ENCODE measurements at regions of chr4 and their contacts with region 1.

Region 1: GRCh38 chr4:119212234-119212963 is at the start of gene USP53:
- DNase-seq: peak; percentile 99
- H3K4me3 ChIP-seq: peak within 1 kb of the TSS; percentile 58 to 99 (median 98)
- H3K27ac ChIP-seq: peak within 1 kb of the TSS; percentile 96
- H3K4me1 ChIP-seq: peaks cover 41% of the 10 kb centered on the region
- H3K27me3 ChIP-seq: no peaks in the 10 kb centered on the region
- CTCF ChIP-seq: no peak
- POLR2A ChIP-seq: peak; percentile 93
- total RNA-seq, gene USP53: 22.8 and 28.3 TPM in 2 replicates

Region 2: DNA sequence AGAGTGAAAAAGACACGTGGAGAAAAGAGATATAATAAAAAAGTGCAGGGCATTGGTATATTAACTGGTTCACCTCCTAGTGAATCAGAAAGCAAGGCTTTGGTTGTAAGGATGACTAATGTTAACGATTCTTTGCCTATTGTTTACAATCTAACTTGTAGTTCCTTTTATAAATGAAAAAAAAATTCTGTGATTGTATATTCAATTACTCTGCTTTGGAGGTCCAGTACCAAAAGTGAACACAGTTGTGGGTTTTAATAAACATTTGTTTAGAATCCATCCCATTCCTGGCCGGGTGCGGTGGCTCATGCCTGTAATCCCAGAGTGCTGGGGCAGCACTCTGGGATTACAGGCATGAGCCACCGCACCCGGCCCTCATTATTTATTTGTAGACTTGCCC is 822.7 kb before region 1 on chr4:
- CTCF ChIA-PET with region 1: no interaction called
- POLR2A ChIA-PET with region 1: no interaction called
- dilution Hi-C with region 1: no loop called
- intact Hi-C with region 1: no loop called
- DNase-seq: no peak
- H3K4me3 ChIP-seq: no peak overlapping the region
- H3K27ac ChIP-seq: no peak overlapping the region
- H3K4me1 ChIP-seq: no peaks in the 10 kb centered on the region
- H3K27me3 ChIP-seq: no peaks in the 10 kb centered on the region
- CTCF ChIP-seq: no peak
- POLR2A ChIP-seq: no peak

Region 3: DNA sequence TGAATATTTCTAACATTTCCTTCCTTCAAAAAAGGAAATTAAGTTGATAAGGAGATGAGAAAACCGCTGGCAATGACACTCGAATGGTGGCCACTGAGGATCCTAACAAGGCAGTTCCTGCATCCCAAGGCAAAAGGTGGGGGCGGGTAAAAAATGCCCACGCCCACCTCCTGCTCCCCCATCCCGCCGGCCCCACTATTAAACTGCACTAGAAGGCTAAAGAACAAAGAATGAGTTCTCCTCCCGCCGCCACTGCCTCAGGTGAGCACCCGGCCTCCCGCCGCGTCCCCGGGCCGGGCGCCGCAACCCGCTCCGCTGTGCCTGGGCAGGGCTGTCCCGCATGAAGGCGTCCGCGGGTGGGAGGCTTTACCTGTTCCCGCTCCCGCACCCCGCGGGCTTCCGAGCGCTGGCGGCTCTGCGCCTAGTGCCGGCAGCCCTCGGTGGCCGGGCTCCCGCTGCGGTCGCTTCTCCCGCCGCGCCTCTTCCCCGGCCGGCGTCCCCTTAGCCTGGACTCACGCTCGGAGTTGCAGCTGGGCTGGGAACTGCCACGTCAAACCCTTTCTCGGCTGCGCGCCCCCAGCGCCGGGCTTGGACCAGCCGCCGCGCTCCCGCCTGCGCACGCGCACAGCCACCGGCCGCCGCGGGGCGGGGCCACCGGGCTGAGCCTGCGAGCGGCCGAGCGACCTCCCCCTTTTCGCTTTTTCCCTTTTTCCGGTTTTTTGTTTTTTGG is 376.7 kb before region 1 on chr4 and contains the start of gene SEC24D:
- CTCF ChIA-PET with region 1: no interaction called
- POLR2A ChIA-PET with region 1: no interaction called
- dilution Hi-C with region 1: no loop called
- intact Hi-C with region 1: loop called (anchors 5 kb)
- DNase-seq: peak; percentile 89
- H3K4me3 ChIP-seq: peak within 1 kb of the TSS; percentile 87 to 95 (median 95)
- H3K27ac ChIP-seq: peak within 1 kb of the TSS; percentile 91
- H3K4me1 ChIP-seq: peaks cover 20% of the 10 kb centered on the region
- H3K27me3 ChIP-seq: no peaks in the 10 kb centered on the region
- CTCF ChIP-seq: no peak
- POLR2A ChIP-seq: peak; percentile 73
- total RNA-seq, gene SEC24D: 127 and 133 TPM in 2 replicates

Region 4: DNA sequence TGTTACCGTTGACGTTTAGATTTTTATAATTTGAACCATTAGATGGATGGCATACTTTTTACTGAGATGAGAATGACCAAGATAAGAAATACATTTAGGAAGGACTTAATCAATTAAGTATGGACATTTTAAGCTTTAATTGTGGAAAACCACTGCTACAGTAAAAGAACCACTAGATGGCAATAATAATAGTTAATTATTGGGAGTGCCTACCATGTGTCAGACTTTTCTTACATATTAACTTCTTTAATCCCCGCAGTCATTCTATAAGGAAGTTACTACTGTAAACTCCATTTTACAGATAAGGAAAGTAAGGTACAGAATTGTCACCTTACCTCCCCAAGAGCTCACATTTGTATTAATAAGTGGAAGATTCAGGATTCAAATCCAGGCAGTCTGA is 125.3 kb before region 1 on chr4:
- CTCF ChIA-PET with region 1: interaction called, 52 read pairs
- POLR2A ChIA-PET with region 1: interaction called, 8 read pairs
- dilution Hi-C with region 1: no loop called
- intact Hi-C with region 1: loop called (anchors 1 kb)
- DNase-seq: peak; percentile 53
- H3K4me3 ChIP-seq: no peak overlapping the region
- H3K27ac ChIP-seq: no peak overlapping the region
- H3K4me1 ChIP-seq: no peaks in the 10 kb centered on the region
- H3K27me3 ChIP-seq: no peaks in the 10 kb centered on the region
- CTCF ChIP-seq: peak; percentile 14 to 22
- POLR2A ChIP-seq: no peak

Region 5: DNA sequence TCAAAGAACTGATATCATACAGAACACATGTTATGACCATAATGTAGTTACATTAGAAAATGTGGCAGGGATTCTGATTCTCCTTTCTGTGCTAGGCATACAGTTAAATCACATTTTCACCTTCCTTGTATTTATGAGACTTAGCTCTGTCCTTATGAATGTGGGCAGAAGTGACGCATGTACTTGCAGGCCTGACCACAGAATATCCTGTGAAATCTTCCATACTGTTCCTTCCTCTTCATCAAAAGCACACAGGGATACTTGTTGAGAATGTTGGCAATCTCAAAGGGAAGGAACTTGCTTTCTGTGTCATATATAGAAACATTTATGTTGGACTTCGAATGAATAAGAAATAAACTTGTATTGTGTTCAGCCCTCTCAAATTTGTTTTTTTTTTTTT is 94.0 kb before region 1 on chr4:
- CTCF ChIA-PET with region 1: interaction called, 5 read pairs
- POLR2A ChIA-PET with region 1: interaction called, 3 read pairs
- dilution Hi-C with region 1: no loop called
- intact Hi-C with region 1: loop called (anchors 1 kb)
- DNase-seq: peak; percentile 89
- H3K4me3 ChIP-seq: no peak overlapping the region
- H3K27ac ChIP-seq: peak overlapping the region; percentile 80
- H3K4me1 ChIP-seq: peaks cover 40% of the 10 kb centered on the region
- H3K27me3 ChIP-seq: no peaks in the 10 kb centered on the region
- CTCF ChIP-seq: no peak
- POLR2A ChIP-seq: no peak

Region 6: DNA sequence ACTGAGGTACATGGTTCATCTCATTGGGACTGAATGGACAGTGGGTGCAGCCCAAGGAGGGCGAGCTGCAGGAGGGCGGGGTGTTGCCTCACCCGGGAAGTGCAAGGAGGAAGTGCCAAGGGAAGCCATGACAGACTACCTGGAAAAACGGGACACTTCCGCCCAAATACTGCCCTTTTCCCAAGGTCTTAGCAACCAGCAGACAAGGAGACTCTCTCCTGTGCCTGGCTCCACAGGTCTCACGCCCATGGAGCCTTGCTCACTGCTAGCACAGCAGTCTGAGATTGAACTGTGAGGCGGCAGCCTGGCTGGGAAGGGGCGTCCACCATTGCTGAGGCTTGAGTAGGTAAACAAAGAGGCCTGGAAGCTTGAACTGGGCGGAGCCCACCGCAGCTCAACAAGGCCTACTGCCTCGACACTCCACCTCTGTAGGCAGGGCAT is 14.6 kb before region 1 on chr4:
- CTCF ChIA-PET with region 1: no interaction called
- POLR2A ChIA-PET with region 1: no interaction called
- dilution Hi-C with region 1: no loop called
- intact Hi-C with region 1: no loop called
- DNase-seq: no peak
- H3K4me3 ChIP-seq: no peak overlapping the region
- H3K27ac ChIP-seq: no peak overlapping the region
- H3K4me1 ChIP-seq: no peaks in the 10 kb centered on the region
- H3K27me3 ChIP-seq: no peaks in the 10 kb centered on the region
- CTCF ChIP-seq: no peak
- POLR2A ChIP-seq: no peak

Region 7: DNA sequence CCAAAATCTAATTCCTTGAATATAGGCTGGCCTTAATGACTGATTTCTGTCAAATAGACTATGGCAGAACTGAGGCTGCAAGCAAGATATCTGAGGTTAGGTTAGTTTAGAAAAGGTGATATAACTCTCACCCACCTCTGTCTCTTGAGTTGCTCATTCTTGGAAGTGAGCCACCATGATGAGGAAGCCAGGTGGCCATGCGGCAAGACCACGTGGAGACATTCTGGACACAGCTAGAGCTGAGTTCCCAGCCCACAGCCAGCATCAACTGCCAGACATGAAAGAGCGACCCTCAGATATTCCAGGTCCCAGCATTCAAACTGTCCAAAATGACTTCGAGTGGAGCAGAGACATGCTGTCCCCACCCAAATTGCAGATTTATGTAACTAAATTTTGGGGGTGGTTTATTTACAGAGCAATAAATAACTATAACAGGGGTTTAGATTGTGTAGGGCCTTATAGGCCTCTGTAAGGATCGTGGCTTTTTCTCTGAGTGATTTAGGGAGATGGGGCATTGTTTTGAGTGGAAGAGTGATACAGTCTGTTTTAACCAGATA is 33.9 kb after region 1 on chr4:
- CTCF ChIA-PET with region 1: no interaction called
- POLR2A ChIA-PET with region 1: no interaction called
- dilution Hi-C with region 1: no loop called
- intact Hi-C with region 1: no loop called
- DNase-seq: no peak
- H3K4me3 ChIP-seq: no peak overlapping the region
- H3K27ac ChIP-seq: no peak overlapping the region
- H3K4me1 ChIP-seq: peaks cover 19% of the 10 kb centered on the region
- H3K27me3 ChIP-seq: no peaks in the 10 kb centered on the region
- CTCF ChIP-seq: no peak
- POLR2A ChIP-seq: no peak

Region 8: DNA sequence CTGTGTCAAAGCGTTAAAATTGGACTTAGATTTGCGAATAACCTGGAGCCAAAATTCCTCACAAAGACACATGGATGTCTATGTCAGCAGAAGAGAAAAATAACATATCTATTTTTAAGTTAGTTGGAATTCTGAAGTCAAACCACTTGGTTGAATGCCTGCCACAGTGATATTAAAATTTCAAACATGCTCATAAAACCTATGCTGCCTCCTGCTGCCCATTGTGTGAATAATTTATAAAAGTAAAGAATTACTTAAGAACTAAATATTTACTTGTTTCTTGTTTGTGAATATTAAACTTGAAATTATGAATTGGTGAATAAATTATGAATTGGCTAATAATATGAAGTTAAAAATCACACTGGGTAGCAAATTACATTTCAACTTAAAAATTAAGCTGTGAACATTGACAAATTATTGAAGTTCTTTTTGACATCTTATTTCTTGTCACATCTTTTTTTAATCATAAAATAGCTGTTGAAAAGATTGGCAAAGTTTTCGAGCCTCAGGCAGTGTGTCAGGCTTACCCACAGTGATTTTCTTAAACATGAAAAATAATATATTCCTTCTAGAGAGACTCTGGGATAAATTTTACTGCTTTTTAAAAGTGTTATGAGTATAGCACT is 74.1 kb after region 1 on chr4:
- CTCF ChIA-PET with region 1: interaction called, 5 read pairs
- POLR2A ChIA-PET with region 1: no interaction called
- dilution Hi-C with region 1: no loop called
- intact Hi-C with region 1: loop called (anchors 1 kb)
- DNase-seq: peak; percentile 83
- H3K4me3 ChIP-seq: no peak overlapping the region
- H3K27ac ChIP-seq: no peak overlapping the region
- H3K4me1 ChIP-seq: peaks cover 44% of the 10 kb centered on the region
- H3K27me3 ChIP-seq: no peaks in the 10 kb centered on the region
- CTCF ChIP-seq: peak; percentile 27 to 28
- POLR2A ChIP-seq: no peak

Region 9: GRCh38 chr4:120049732-120050494 is 837.5 kb after region 1 on chr4:
- CTCF ChIA-PET with region 1: no interaction called
- POLR2A ChIA-PET with region 1: no interaction called
- dilution Hi-C with region 1: no loop called
- intact Hi-C with region 1: loop called (anchors 2 kb)
- DNase-seq: peak; percentile 76
- H3K4me3 ChIP-seq: no peak overlapping the region
- H3K27ac ChIP-seq: no peak overlapping the region
- H3K4me1 ChIP-seq: peaks cover 3% of the 10 kb centered on the region
- H3K27me3 ChIP-seq: no peaks in the 10 kb centered on the region
- CTCF ChIP-seq: peak; percentile 77 to 79
- POLR2A ChIP-seq: no peak